ENCODE measurements at regions of chr9 and their contacts with region 1.

Region 1: GRCh38 chr9:112361601-112362000 is 18.3 kb upstream of the HSDL2 start:
- DNase-seq: no peak
- ATAC-seq: no peak
- H3K4me3 Mint-ChIP-seq: no peak overlapping the region
- H3K27ac Mint-ChIP-seq: no peak overlapping the region
- H3K4me1 Mint-ChIP-seq: peaks cover 12% of the 10 kb centered on the region
- H3K27me3 Mint-ChIP-seq: peaks cover 2% of the 10 kb centered on the region
- CTCF ChIP-seq: peak; percentile 89

Region 2: GRCh38 chr9:112086627-112087026 is 275.0 kb before region 1 on chr9:
- CTCF ChIA-PET with region 1: interaction called, 71 read pairs
- POLR2A ChIA-PET with region 1: no interaction called
- intact Hi-C with region 1: no loop called
- DNase-seq: no peak
- ATAC-seq: no peak
- H3K4me3 Mint-ChIP-seq: no peak overlapping the region
- H3K27ac Mint-ChIP-seq: no peak overlapping the region
- H3K4me1 Mint-ChIP-seq: peaks cover 5% of the 10 kb centered on the region
- H3K27me3 Mint-ChIP-seq: no peaks in the 10 kb centered on the region
- CTCF ChIP-seq: peak; percentile 73

Region 3: GRCh38 chr9:112112941-112113681 is 248.5 kb before region 1 on chr9:
- CTCF ChIA-PET with region 1: interaction called, 54 read pairs
- POLR2A ChIA-PET with region 1: interaction called, 3 read pairs
- intact Hi-C with region 1: no loop called
- DNase-seq: peak; percentile 13
- ATAC-seq: no peak
- H3K4me3 Mint-ChIP-seq: no peak overlapping the region
- H3K27ac Mint-ChIP-seq: no peak overlapping the region
- H3K4me1 Mint-ChIP-seq: no peaks in the 10 kb centered on the region
- H3K27me3 Mint-ChIP-seq: no peaks in the 10 kb centered on the region
- CTCF ChIP-seq: peak; percentile 45

Region 4: DNA sequence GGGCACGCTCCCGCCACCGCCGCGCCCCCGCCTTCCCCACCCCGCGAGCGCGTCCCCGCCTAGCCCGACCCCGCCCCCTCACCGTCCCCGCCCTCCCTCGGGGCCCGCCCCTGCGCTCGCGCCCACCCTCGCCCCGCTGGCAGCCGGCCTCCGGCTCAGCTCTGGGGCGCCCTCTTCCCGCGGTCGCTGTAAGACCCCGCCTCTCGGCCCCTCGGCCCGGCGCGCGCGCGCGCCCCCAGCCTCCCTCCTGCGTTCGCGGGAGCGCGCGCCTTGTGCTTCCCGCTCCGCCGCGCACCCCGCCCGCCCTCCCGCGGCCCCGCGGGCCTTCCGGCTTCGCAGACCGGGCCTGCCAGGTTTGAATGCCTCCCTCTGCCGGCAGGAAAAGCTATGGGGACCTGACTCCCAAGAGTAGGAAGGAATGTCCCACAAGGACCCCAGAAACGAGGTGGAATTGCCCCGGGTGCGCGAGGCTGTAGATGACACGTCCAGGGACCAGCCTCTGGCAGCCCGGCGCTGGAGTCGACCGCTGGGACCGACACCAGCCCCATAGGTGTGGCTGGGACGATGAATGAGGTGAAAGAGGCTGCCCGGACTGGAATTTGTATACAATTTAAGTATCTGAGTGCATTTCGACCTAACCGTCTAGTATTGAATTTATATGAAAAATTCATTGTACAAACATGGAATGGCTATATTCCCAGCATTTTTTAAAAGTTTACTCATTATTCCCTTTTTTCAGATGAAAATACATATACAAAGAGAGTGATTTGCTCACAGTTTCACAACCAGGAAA is 27.8 kb before region 1 on chr9:
- CTCF ChIA-PET with region 1: interaction called, 21 read pairs
- POLR2A ChIA-PET with region 1: interaction called, 3 read pairs
- intact Hi-C with region 1: no loop called
- DNase-seq: peak; percentile 94
- ATAC-seq: peak; percentile 88
- H3K4me3 Mint-ChIP-seq: peak overlapping the region; percentile 97
- H3K27ac Mint-ChIP-seq: peak overlapping the region; percentile 98
- H3K4me1 Mint-ChIP-seq: peaks cover 30% of the 10 kb centered on the region
- H3K27me3 Mint-ChIP-seq: no peaks in the 10 kb centered on the region
- CTCF ChIP-seq: peak; percentile 53

Region 5: DNA sequence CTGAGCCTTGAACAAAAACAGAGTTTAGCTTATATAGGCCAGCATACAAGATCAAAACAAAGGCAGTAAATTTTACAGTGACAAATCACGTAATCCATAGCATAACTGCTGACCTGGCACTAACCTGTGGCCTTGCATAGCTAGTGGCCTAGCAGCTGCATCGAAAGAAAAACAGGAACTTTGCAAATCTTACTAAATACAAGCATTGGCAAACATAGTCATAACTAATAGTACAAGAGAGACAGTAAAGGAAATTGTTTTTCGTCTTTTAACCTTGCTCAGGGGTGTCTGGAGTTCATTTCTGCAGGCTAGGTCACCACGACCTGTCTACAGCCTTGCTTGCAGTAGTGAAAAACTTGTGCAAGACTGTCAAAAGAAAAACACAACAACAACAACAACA is 23.1 kb after region 1 on chr9:
- CTCF ChIA-PET with region 1: interaction called, 55 read pairs
- POLR2A ChIA-PET with region 1: interaction called, 6 read pairs
- intact Hi-C with region 1: no loop called
- DNase-seq: no peak
- ATAC-seq: no peak
- H3K4me3 Mint-ChIP-seq: no peak overlapping the region
- H3K27ac Mint-ChIP-seq: no peak overlapping the region
- H3K4me1 Mint-ChIP-seq: peaks cover 25% of the 10 kb centered on the region
- H3K27me3 Mint-ChIP-seq: no peaks in the 10 kb centered on the region
- CTCF ChIP-seq: no peak

Region 6: GRCh38 chr9:112655668-112656067 is 294.1 kb after region 1 on chr9:
- CTCF ChIA-PET with region 1: no interaction called
- POLR2A ChIA-PET with region 1: no interaction called
- intact Hi-C with region 1: no loop called
- DNase-seq: no peak
- ATAC-seq: no peak
- H3K4me3 Mint-ChIP-seq: no peak overlapping the region
- H3K27ac Mint-ChIP-seq: no peak overlapping the region
- H3K4me1 Mint-ChIP-seq: no peaks in the 10 kb centered on the region
- H3K27me3 Mint-ChIP-seq: no peaks in the 10 kb centered on the region
- CTCF ChIP-seq: no peak

Measured in activated CD8-positive, alpha-beta T cell treated with anti-CD3 and anti-CD28 coated beads for 36 hours (primary cell).